Motor neuron (in vitro differentiated cells): ENCODE measurements at regions of chr1 and their contacts with region 1.

Region 1: DNA sequence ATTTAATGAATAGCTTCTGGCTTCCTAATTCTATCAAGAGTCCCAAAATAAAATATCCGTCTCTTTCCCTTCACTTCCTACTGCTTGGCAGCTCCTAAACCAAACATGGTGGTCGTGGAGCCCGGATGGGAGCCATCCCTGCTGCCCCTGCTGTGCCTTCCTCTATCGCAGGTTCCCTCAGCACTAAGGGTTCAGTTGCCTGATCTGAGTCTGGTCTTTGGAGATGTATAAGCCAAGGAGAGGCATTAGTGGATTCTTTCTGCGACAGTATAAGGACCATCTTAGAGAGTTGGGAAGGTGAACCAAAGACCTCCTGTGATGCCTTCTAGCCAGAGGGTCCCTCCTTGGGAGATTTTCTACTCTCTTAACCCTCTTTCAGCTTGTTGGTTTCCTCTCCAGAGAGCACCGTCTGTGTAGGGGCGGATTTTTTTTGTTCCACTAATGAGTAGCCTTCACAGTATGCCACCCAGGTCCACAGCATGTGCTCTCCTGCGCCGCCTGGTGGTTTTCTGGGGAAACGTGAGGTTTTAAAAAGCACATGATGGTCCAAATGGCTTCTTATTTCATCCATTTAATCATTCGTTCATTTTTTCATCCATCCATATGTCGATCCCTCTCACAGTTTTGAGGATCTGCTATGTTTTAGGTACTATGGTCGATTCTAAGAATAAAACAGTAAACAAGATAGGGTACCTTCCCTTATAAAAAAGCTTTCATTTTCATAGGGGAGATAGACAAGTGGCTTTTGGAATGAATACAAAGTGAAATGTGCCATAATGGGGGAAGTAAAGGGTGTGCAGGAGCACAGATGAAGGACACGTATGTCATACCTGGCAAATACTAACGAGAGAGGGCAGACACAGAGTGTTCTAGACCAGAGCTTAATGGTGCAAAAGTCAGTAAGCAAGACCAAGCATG is 71.0 kb downstream of the NFASC start:
- ATAC-seq: peak; percentile 60 to 83 (median 74)
- H3K4me3 ChIP-seq: no peak overlapping the region
- H3K27ac ChIP-seq: no peak overlapping the region
- H3K4me1 ChIP-seq: peaks cover 31 to 41% of the 10 kb centered on the region in 2 donors

Region 2: GRCh38 chr1:204806943-204807687 is 134.6 kb before region 1 on chr1:
- in situ Hi-C with region 1: loop called in 5 of 9 experiments (anchors 10 to 25 kb)
- ATAC-seq: peak; percentile 96 to 98 (median 97)
- H3K4me3 ChIP-seq: peak overlapping the region; percentile 51 to 56 (median 52)
- H3K27ac ChIP-seq: peak overlapping the region; percentile 45 to 57
- H3K4me1 ChIP-seq: peaks cover 2 to 12% of the 10 kb centered on the region in 2 donors

Region 3: GRCh38 chr1:204819495-204819894 is 122.2 kb before region 1 on chr1:
- in situ Hi-C with region 1: loop called in 5 of 9 experiments (anchors 10 to 25 kb)
- ATAC-seq: peak in 5 of 8 experiments; percentile 81 to 98 (median 97)
- H3K4me3 ChIP-seq: no peak overlapping the region
- H3K27ac ChIP-seq: no peak overlapping the region
- H3K4me1 ChIP-seq: peaks cover 26 to 28% of the 10 kb centered on the region in 2 donors

Region 4: GRCh38 chr1:204828338-204828850 is 113.3 kb before region 1 on chr1:
- in situ Hi-C with region 1: loop called in 4 of 9 experiments (anchors 25 kb)
- ATAC-seq: peak; percentile 84 to 100 (median 88)
- H3K4me3 ChIP-seq: peak overlapping the region; percentile 44 to 91 (median 73)
- H3K27ac ChIP-seq: peak overlapping the region; percentile 44 to 83
- H3K4me1 ChIP-seq: peaks cover 37 to 42% of the 10 kb centered on the region in 2 donors

Region 5: GRCh38 chr1:205141236-205142101 is 199.8 kb after region 1 on chr1:
- in situ Hi-C with region 1: no loop called
- ATAC-seq: peak; percentile 85 to 93 (median 90)
- H3K4me3 ChIP-seq: no peak overlapping the region
- H3K27ac ChIP-seq: no peak overlapping the region
- H3K4me1 ChIP-seq: peaks cover 3 to 7% of the 10 kb centered on the region in 2 donors